ENCODE measurements at regions of chr1 and their contacts with region 1.

Region 1: DNA sequence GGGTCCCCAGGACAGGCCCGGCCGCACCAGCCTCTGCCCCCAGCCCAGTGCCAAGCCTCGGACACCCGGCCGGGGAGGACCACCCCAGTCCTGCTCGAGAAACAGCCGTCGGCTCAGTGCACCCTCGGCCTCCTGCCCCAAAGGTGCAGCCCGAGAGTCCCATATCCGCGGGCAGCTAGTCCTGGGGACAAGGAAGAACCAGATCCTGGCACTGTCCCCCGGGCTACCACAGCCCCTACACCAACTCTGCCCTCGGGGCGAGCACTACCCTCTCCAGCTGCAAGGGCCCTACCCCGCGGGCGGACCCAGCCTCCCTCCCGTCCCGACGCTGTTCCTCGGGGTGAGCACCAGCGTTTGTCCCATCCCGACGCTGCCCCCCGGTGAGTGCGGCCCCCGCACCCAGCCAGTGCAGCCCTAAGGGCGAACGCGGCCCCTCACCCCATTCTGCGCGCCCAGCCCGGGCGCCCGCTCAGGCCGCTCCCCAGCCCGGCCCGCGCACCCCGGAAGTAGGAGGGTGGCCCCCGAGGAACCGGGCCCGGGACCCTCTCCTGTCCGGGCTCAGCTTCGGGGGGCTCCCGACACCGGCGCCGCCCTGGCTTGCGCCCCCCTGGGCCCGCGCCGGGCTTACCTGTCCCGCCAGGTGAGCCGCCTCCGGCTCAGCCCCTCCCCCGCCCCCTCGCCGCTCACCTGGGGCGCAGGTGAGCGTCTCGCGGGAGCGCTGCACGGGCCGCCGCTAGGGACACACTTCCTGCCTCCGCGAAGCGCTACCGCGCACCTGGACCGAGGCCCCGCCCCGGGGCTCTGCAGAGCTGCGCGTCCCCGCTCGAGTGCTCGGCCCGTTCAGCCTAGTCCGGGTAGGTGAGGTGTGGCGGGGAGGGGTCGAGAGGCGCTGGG is at the start of gene KDF1:
- DNase-seq: no peak
- ATAC-seq: peak; percentile 76
- H3K4me3 ChIP-seq: peak within 1 kb of the TSS; percentile 82 to 93 (median 88)
- H3K27ac ChIP-seq: peak within 1 kb of the TSS; percentile 6
- H3K4me1 ChIP-seq: peaks cover 66% of the 10 kb centered on the region
- H3K27me3 ChIP-seq: no peaks in the 10 kb centered on the region; a peak in 1 of 5 replicates
- CTCF ChIP-seq: peak; percentile 48; the same call in 1 of the 2 replicates
- EP300 ChIP-seq: no peak
- POLR2A ChIP-seq: 0 out of 4 replicates have a peak, but pooled peaks of 1 of the 2 experiments have one; percentile 11
- RAD21 ChIP-seq: no peak; the same call in 1 of the 2 replicates
- total RNA-seq, gene KDF1: 1.9 and 2.4 TPM in 2 replicates

Region 2: DNA sequence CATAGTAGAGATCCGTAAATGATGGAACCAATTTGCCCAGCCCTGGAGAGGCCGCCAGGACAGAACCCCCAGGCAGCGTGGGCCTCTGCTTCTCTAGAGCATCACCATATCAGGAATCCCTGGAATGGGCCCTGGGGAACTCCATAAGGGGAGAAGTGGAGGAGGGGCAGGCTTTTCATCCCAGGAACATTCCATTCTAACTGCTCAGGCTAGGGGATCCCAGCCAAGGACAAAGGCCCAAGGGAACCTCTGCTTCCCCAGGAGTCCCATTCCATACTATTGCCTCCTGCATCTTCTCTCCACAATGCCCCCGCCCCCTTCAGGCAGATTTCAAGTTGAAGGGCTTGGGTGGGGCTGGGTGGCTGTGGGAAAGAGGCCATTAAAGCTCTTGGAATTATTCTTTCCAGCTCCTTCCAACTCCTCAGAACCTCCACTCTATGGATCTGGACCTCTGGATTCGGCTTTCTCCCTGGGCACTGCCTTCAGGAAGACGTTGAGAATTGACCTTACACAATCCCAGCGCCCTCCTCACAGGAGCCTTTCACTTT is 39.5 kb after region 1 on chr1:
- CTCF ChIA-PET with region 1: no interaction called
- POLR2A ChIA-PET with region 1: interaction called, 63 read pairs
- in situ Hi-C with region 1: loop called (anchors 5 kb)
- intact Hi-C with region 1: no loop called
- DNase-seq: peak; percentile 77
- ATAC-seq: peak; percentile 3; the same call in 1 of the 3 replicates
- H3K4me3 ChIP-seq: no peak overlapping the region
- H3K27ac ChIP-seq: no peak overlapping the region
- H3K4me1 ChIP-seq: peaks cover 91% of the 10 kb centered on the region
- H3K27me3 ChIP-seq: no peaks in the 10 kb centered on the region; a peak in 1 of 5 replicates
- CTCF ChIP-seq: no peak
- EP300 ChIP-seq: no peak
- POLR2A ChIP-seq: peak in 1 of 2 experiments; percentile 33; a peak in 1 of 4 replicates
- RAD21 ChIP-seq: no peak

Region 3: GRCh38 chr1:27044613-27045151 is 84.7 kb after region 1 on chr1:
- CTCF ChIA-PET with region 1: no interaction called
- POLR2A ChIA-PET with region 1: no interaction called
- in situ Hi-C with region 1: no loop called
- intact Hi-C with region 1: loop called (anchors 10 kb)
- DNase-seq: peak; percentile 62
- ATAC-seq: peak; percentile 87
- H3K4me3 ChIP-seq: no peak overlapping the region
- H3K27ac ChIP-seq: no peak overlapping the region
- H3K4me1 ChIP-seq: peaks cover 8% of the 10 kb centered on the region; the same call in 1 of the 2 replicates
- H3K27me3 ChIP-seq: peaks cover 6 to 40% of the 10 kb centered on the region in 2 experiments; a peak in 4 of 5 replicates
- CTCF ChIP-seq: peak; percentile 95
- EP300 ChIP-seq: no peak
- POLR2A ChIP-seq: no peak
- RAD21 ChIP-seq: peak; percentile 89